Activated T-helper 1 cell treated with anti-CD3 and anti-CD28 coated beads, Interleukin-12 subunit alpha, Interleukin-12 subunit beta, Interleukin-2, Interleukin-4 antibody, amounts not matched to agents 30 ng/mL and 10 ng/mL and 1 ng/mL, durations not matched to agents 14 hours and 24 hours and 36 hours (primary cell): ENCODE measurements at regions of chr18 and their contacts with region 1.

Region 1: DNA sequence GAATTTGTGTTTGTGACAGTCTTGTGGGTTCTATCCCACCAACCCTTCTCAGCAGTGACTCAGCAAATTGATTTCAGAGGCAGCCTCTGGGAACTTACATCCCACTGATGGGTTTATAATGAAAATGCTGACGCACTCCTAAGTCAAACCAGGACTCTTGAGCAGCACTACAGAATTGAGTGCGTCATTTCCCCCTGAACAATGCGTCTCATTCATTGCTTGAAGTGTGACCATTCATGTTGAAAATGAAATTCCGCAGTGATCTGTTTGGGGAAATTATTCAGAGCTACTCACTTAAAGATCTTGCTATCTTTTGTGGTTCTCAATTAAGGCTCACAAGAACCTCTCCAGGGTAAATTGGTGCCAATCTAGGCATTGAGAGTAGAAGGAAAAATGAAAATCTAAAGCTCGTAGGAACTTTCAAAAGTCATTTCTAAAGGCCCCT is 417.7 kb upstream of the SLC14A2 start:
- DNase-seq: no peak
- H3K4me3 Mint-ChIP-seq: no peak overlapping the region
- H3K27ac Mint-ChIP-seq: no peak overlapping the region
- H3K4me1 Mint-ChIP-seq: no peaks in the 10 kb centered on the region
- H3K27me3 Mint-ChIP-seq: peaks cover 10% of the 10 kb centered on the region

Region 2: GRCh38 chr18:44229693-44230108 is 967.8 kb before region 1 on chr18:
- intact Hi-C with region 1: loop called (anchors 10 kb)
- DNase-seq: no peak
- H3K4me3 Mint-ChIP-seq: no peak overlapping the region
- H3K27ac Mint-ChIP-seq: no peak overlapping the region
- H3K4me1 Mint-ChIP-seq: no peaks in the 10 kb centered on the region
- H3K27me3 Mint-ChIP-seq: no peaks in the 10 kb centered on the region

Region 3: GRCh38 chr18:45090526-45091140 is 106.9 kb before region 1 on chr18:
- intact Hi-C with region 1: no loop called
- DNase-seq: no peak
- H3K4me3 Mint-ChIP-seq: no peak overlapping the region
- H3K27ac Mint-ChIP-seq: no peak overlapping the region
- H3K4me1 Mint-ChIP-seq: no peaks in the 10 kb centered on the region
- H3K27me3 Mint-ChIP-seq: no peaks in the 10 kb centered on the region

Region 4: DNA sequence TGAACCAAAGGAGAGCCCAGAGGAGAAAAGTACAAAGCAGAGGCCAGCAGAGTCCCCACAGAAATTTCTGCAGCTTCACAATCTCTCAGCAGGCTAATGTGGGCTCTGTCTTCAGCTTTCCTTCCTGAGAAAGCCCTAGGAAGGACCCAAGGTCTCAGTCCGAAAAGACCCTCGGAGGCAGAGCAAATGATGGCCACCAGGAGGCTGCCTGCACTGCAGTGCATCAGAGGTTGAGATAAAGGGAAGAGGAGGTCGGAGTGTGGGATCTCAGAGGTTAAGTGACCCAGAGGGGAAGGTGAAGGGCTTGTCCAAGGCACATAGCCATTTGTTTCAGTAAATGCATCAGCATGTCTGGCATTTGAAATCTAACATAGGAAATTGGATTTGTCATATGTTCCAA is 118.6 kb after region 1 on chr18:
- intact Hi-C with region 1: no loop called
- DNase-seq: no peak
- H3K4me3 Mint-ChIP-seq: no peak overlapping the region
- H3K27ac Mint-ChIP-seq: no peak overlapping the region
- H3K4me1 Mint-ChIP-seq: no peaks in the 10 kb centered on the region
- H3K27me3 Mint-ChIP-seq: no peaks in the 10 kb centered on the region